MCF 10A (cell line): ENCODE measurements at regions of chr5 and their contacts with region 1.

Region 1: GRCh38 chr5:16465544-16466466 is at the start of gene ZNF622:
- DNase-seq: peak; percentile 94
- H3K4me3 Mint-ChIP-seq: peak within 1 kb of the TSS; percentile 98
- H3K27ac Mint-ChIP-seq: peak within 1 kb of the TSS; percentile 98
- H3K4me1 Mint-ChIP-seq: peaks cover 53% of the 10 kb centered on the region
- H3K27me3 Mint-ChIP-seq: no peaks in the 10 kb centered on the region
- CTCF ChIP-seq: no peak
- total RNA-seq, gene ZNF622: 34.0 and 34.1 TPM in 2 replicates

Region 2: DNA sequence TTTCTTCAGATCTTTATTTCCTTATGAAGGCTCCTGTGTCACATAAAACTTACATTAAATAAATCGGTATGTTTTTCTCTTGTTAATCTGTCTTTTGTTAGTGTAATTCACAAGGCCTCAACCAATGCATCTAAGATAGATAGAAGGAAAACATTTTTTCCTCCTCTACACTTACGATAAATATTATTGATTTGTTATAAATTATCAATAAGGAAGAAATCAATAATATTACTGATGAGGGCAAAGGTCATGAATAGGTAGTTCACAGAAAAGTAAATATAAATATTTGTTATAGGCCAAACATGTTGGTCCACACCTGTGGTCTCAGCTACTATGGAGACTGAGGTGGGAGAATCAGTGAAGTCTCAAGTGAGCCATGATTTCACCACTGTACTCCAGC is 257.9 kb before region 1 on chr5:
- CTCF ChIA-PET with region 1: no interaction called
- POLR2A ChIA-PET with region 1: no interaction called
- intact Hi-C with region 1: no loop called
- DNase-seq: no peak
- H3K4me3 Mint-ChIP-seq: no peak overlapping the region
- H3K27ac Mint-ChIP-seq: no peak overlapping the region
- H3K4me1 Mint-ChIP-seq: peaks cover 7% of the 10 kb centered on the region
- H3K27me3 Mint-ChIP-seq: peaks cover 24% of the 10 kb centered on the region
- CTCF ChIP-seq: no peak

Region 3: GRCh38 chr5:16480821-16481538 is 15.2 kb after region 1 on chr5:
- CTCF ChIA-PET with region 1: interaction called, 11 read pairs
- POLR2A ChIA-PET with region 1: interaction called, 25 read pairs
- intact Hi-C with region 1: no loop called
- DNase-seq: no peak
- H3K4me3 Mint-ChIP-seq: no peak overlapping the region
- H3K27ac Mint-ChIP-seq: no peak overlapping the region
- H3K4me1 Mint-ChIP-seq: peaks cover 12% of the 10 kb centered on the region
- H3K27me3 Mint-ChIP-seq: no peaks in the 10 kb centered on the region
- CTCF ChIP-seq: no peak

Region 4: GRCh38 chr5:16842896-16843295 is 377.1 kb after region 1 on chr5:
- CTCF ChIA-PET with region 1: no interaction called
- POLR2A ChIA-PET with region 1: no interaction called
- intact Hi-C with region 1: no loop called
- DNase-seq: no peak
- H3K4me3 Mint-ChIP-seq: no peak overlapping the region
- H3K27ac Mint-ChIP-seq: no peak overlapping the region
- H3K4me1 Mint-ChIP-seq: no peaks in the 10 kb centered on the region
- H3K27me3 Mint-ChIP-seq: no peaks in the 10 kb centered on the region
- CTCF ChIP-seq: no peak